ENCODE measurements at regions of chr12 and their contacts with region 1.

Region 1: GRCh38 chr12:127108360-127109215 is 1158.4 kb upstream of the TMEM132C start:
- DNase-seq: peak; percentile 13
- H3K4me3 ChIP-seq: no peak overlapping the region
- H3K27ac ChIP-seq: no peak overlapping the region
- H3K4me1 ChIP-seq: no peaks in the 10 kb centered on the region
- H3K27me3 ChIP-seq: no peaks in the 10 kb centered on the region
- CTCF ChIP-seq: peak in 3 of 4 experiments; percentile 47 to 51 (median 48)
- POLR2A ChIP-seq: no peak

Region 2: DNA sequence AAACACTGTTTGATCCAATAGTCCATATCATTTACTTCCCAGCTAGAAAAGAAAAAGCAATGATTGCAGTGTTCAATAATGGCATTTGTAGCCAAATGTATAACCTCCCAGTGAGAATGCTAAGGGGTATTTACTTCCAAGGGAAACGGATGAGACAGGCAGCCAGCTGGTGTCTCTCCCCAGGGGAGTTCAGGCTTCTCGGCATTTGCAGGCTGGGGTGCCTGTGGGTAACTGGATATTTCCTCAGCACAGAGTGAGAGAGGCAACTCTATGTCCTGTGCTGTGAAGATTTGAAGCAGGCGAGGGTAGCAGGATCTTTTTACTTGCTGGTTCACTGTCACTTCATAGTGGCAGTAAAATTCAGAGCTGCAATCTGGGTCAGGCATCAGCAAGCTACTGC is 297.2 kb before region 1 on chr12:
- intact Hi-C with region 1: no loop called
- DNase-seq: no peak
- H3K4me3 ChIP-seq: no peak overlapping the region
- H3K27ac ChIP-seq: no peak overlapping the region
- H3K4me1 ChIP-seq: no peaks in the 10 kb centered on the region
- H3K27me3 ChIP-seq: no peaks in the 10 kb centered on the region
- CTCF ChIP-seq: no peak
- POLR2A ChIP-seq: no peak

Region 3: GRCh38 chr12:127241072-127241817 is 132.7 kb after region 1 on chr12:
- intact Hi-C with region 1: no loop called
- DNase-seq: no peak
- H3K4me3 ChIP-seq: no peak overlapping the region
- H3K27ac ChIP-seq: no peak overlapping the region
- H3K4me1 ChIP-seq: no peaks in the 10 kb centered on the region
- H3K27me3 ChIP-seq: peaks cover 5% of the 10 kb centered on the region
- CTCF ChIP-seq: no peak
- POLR2A ChIP-seq: no peak

Region 4: GRCh38 chr12:127381048-127381668 is 272.6 kb after region 1 on chr12:
- intact Hi-C with region 1: loop called (anchors 10 kb)
- DNase-seq: no peak
- H3K4me3 ChIP-seq: no peak overlapping the region
- H3K27ac ChIP-seq: no peak overlapping the region
- H3K4me1 ChIP-seq: no peaks in the 10 kb centered on the region
- H3K27me3 ChIP-seq: no peaks in the 10 kb centered on the region
- CTCF ChIP-seq: peak in 3 of 4 experiments; percentile 49 to 71 (median 64)
- POLR2A ChIP-seq: no peak

Region 5: GRCh38 chr12:127677537-127678131 is 569.0 kb after region 1 on chr12:
- intact Hi-C with region 1: loop called (anchors 5 kb)
- DNase-seq: peak; percentile 36
- H3K4me3 ChIP-seq: no peak overlapping the region
- H3K27ac ChIP-seq: no peak overlapping the region
- H3K4me1 ChIP-seq: no peaks in the 10 kb centered on the region
- H3K27me3 ChIP-seq: no peaks in the 10 kb centered on the region
- CTCF ChIP-seq: peak; percentile 31 to 60 (median 51)
- POLR2A ChIP-seq: no peak